ENCODE measurements at regions of chr5 and their contacts with region 1.

Region 1: DNA sequence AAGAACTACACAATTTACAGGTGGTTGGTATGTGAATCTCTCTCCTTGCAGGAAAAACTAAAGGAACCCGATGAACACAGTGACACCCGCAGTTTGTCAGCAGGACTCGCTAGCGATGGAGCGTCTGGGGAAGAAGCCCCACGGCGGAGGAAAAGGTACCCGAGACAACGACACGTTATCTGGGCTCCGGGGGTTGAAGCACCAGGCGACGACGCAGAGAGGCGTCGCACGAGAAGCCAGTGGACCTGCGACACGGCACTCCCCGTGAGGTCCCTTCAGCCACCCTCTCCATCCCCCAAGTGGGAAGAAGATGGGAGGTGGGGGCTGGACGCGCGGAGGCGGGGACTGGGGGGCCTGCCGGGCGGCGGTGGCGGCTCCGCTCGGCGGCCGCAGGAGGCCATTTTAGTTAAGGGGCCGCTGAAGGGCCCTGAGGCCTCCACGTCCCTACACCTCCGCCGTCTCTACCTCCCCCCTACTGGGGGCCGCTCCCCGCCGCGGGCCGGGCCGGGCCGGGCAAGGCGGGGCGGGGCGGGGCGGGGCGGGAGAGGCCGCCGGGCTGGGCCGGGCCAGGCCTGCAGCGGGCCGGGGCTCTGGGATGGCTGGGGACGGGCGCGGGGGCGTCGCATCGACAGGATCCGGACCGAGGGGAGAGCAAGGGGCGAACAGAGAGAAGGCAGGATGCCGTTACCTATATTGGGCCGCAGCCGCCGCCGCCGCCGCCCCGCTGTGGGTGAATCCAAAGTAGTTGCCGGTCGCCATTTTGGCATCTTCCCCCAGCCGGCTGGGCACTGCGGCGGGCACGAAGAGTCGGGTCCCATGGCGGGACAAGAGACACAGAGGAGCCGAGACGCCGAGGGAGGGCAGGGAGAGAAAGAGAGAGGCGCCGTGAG is 754 bp downstream of the ZFR start:
- DNase-seq: peak; percentile 50
- H3K4me3 Mint-ChIP-seq: peak overlapping the region; percentile 93
- H3K27ac Mint-ChIP-seq: peak overlapping the region; percentile 96
- H3K4me1 Mint-ChIP-seq: peaks cover 35% of the 10 kb centered on the region
- H3K27me3 Mint-ChIP-seq: no peaks in the 10 kb centered on the region

Region 2: DNA sequence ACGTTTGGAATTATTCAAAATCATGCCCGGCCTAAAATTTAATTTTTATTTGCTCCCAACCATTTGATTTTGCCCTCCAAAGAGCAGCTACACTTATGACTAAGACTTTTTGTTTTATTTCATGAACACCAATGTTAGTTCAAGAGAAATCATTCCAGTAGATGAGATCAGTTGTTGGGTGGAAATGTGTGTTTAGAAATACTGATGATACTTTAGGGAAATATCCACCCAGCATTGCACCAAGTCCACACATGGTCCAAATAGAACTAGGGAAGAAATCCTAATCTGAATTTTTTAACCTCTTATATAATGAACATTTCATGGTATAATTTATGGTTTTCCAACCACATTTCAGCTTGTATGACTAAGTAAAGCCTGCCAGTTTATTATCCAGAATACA is 241.4 kb before region 1 on chr5:
- CTCF ChIA-PET with region 1: no interaction called
- intact Hi-C with region 1: loop called (anchors 2 kb)
- DNase-seq: no peak
- H3K4me3 Mint-ChIP-seq: no peak overlapping the region
- H3K27ac Mint-ChIP-seq: no peak overlapping the region
- H3K4me1 Mint-ChIP-seq: peaks cover 33% of the 10 kb centered on the region
- H3K27me3 Mint-ChIP-seq: peaks cover 3% of the 10 kb centered on the region

Region 3: GRCh38 chr5:32319392-32319791 is 124.4 kb before region 1 on chr5:
- CTCF ChIA-PET with region 1: no interaction called
- intact Hi-C with region 1: no loop called
- DNase-seq: no peak
- H3K4me3 Mint-ChIP-seq: no peak overlapping the region
- H3K27ac Mint-ChIP-seq: no peak overlapping the region
- H3K4me1 Mint-ChIP-seq: no peaks in the 10 kb centered on the region
- H3K27me3 Mint-ChIP-seq: no peaks in the 10 kb centered on the region

Region 4: DNA sequence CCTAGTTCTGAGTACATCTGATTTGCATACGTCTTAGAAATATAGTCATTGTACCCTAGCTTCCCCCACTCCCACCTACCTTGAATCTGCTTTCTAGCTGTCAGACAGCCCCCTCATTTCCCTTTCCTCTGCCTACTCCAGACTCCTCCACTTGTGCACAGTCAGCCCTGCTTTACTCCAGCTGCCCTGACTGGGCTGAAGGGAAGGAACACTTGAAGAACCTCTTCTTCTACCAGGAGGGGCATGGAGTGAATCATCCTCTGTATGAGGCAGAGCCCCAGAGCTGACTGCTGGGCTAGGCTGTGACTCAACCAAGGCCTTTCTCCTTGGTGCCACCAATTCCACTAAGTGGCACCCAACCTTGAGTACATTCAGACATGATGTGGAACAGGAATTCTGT is 18.8 kb after region 1 on chr5:
- CTCF ChIA-PET with region 1: interaction called, 4 read pairs
- intact Hi-C with region 1: loop called (anchors 1 kb)
- DNase-seq: peak; percentile 71
- H3K4me3 Mint-ChIP-seq: no peak overlapping the region
- H3K27ac Mint-ChIP-seq: peak overlapping the region; percentile 89
- H3K4me1 Mint-ChIP-seq: peaks cover 13% of the 10 kb centered on the region
- H3K27me3 Mint-ChIP-seq: no peaks in the 10 kb centered on the region